ENCODE measurements at regions of chr5 and their contacts with region 1.

Region 1: GRCh38 chr5:124649491-124650146 is 96.8 kb downstream of the ZNF608 start:
- DNase-seq: peak; percentile 84
- H3K4me3 ChIP-seq: no peak overlapping the region
- H3K27ac ChIP-seq: peak overlapping the region; percentile 81 to 92 (median 82)
- H3K4me1 ChIP-seq: peaks cover 19 to 52% (median 44%) of the 10 kb centered on the region in 4 donors
- H3K27me3 ChIP-seq: no peaks in the 10 kb centered on the region
- CTCF ChIP-seq: no peak
- EP300 ChIP-seq: no peak
- POLR2A ChIP-seq: no peak

Region 2: GRCh38 chr5:124132843-124133242 is 516.8 kb before region 1 on chr5:
- in situ Hi-C with region 1: no loop called
- intact Hi-C with region 1: no loop called
- DNase-seq: no peak
- H3K4me3 ChIP-seq: no peak overlapping the region
- H3K27ac ChIP-seq: no peak overlapping the region
- H3K4me1 ChIP-seq: no peaks in the 10 kb centered on the region
- H3K27me3 ChIP-seq: no peaks in the 10 kb centered on the region
- CTCF ChIP-seq: no peak
- EP300 ChIP-seq: no peak
- POLR2A ChIP-seq: no peak

Region 3: GRCh38 chr5:124748687-124749594 is 99.3 kb after region 1 on chr5:
- in situ Hi-C with region 1: loop called in 1 of 4 experiments (anchors 5 kb)
- intact Hi-C with region 1: loop called (anchors 5 kb)
- DNase-seq: peak; percentile 87
- H3K4me3 ChIP-seq: peak overlapping the region; percentile 32 to 73 (median 60)
- H3K27ac ChIP-seq: peak overlapping the region; percentile 94 to 98 (median 96)
- H3K4me1 ChIP-seq: peaks cover 3 to 30% (median 22%) of the 10 kb centered on the region in 4 donors
- H3K27me3 ChIP-seq: no peaks in the 10 kb centered on the region
- CTCF ChIP-seq: peak in 1 of 5 experiments; percentile 18
- EP300 ChIP-seq: no peak
- POLR2A ChIP-seq: peak; percentile 92

Region 4: DNA sequence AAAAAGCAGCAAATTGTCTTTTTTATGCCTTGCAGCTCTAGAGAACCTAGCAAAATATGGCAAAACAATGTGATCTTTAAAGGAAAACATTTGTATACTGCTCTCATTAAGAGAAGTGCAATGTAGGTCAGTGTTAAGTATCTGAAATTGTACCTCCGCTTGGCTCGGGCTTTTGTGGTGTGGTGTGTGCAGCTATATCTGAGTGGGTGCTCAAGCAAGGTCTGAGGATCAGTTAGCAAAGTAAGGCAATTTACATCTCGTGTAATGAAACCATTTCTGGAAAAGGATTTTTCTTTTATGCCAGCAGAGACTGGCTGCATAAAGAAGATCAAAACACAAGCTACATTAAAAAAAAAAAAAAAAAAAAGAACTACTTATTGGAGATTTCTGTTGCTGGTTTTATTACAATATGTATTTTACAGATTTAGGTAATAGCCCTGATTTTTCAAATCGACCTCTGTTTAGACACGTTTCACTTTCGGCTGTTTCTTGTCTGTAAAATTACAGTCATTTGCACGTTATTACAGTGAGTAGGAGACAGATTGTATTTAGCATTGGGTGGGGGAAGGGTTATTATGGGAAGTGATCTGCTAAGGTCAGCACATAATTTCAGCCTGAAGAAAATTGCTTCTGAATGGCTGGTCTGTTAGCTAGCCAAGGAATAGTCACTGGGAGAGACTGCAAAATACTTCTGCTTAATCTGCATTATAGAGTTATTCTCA is 104.7 kb after region 1 on chr5:
- in situ Hi-C with region 1: loop called in 1 of 4 experiments (anchors 5 kb)
- intact Hi-C with region 1: loop called (anchors 5 kb)
- DNase-seq: no peak
- H3K4me3 ChIP-seq: no peak overlapping the region
- H3K27ac ChIP-seq: no peak overlapping the region
- H3K4me1 ChIP-seq: peaks cover 3 to 15% (median 6%) of the 10 kb centered on the region in 4 donors
- H3K27me3 ChIP-seq: no peaks in the 10 kb centered on the region
- CTCF ChIP-seq: no peak
- EP300 ChIP-seq: no peak
- POLR2A ChIP-seq: no peak

Region 5: DNA sequence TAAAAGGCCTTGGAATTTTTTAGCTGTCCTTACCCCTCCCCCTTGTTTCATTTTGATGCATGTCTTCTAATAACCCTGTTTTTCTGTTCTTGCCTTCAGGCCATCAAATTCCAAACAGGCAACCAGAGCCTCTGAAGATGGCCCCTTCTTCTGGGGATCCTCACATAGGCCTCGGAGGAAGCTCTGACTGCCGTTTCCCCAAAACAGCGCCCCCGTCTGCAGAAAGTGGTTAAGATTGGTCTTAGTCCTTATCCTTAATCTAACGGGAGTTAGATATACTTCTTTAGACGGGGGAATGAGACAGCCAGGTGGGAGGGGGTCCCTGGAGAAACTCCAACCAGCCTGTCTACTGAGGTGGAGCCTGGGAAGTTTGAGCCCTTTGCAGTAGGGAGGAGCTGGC is 323.1 kb after region 1 on chr5:
- in situ Hi-C with region 1: no loop called
- intact Hi-C with region 1: no loop called
- DNase-seq: no peak
- H3K4me3 ChIP-seq: no peak overlapping the region
- H3K27ac ChIP-seq: no peak overlapping the region
- H3K4me1 ChIP-seq: no peaks in the 10 kb centered on the region
- H3K27me3 ChIP-seq: no peaks in the 10 kb centered on the region
- CTCF ChIP-seq: no peak
- EP300 ChIP-seq: no peak
- POLR2A ChIP-seq: no peak

Measured in transverse colon (tissue), 4 donors.